ENCODE measurements at regions of chr6 and their contacts with region 1.

Region 1: GRCh38 chr6:149513915-149514314 is 29.1 kb upstream of the ZC3H12D start:
- DNase-seq: no peak
- ATAC-seq: peak in 2 of 8 donors; percentile 14 to 20
- H3K4me3 ChIP-seq: no peak overlapping the region
- H3K27ac ChIP-seq: no peak overlapping the region
- H3K4me1 ChIP-seq: peaks cover 0 to 8% (median 0%) of the 10 kb centered on the region in 9 donors
- H3K27me3 ChIP-seq: no peaks in the 10 kb centered on the region
- CTCF ChIP-seq: no peak

Region 2: GRCh38 chr6:149028767-149029405 is 485.0 kb before region 1 on chr6:
- intact Hi-C with region 1: loop called in 9 of 10 experiments (anchors 2 to 10 kb)
- DNase-seq: peak in 1 of 2 donors; percentile 84
- ATAC-seq: peak; percentile 57 to 80 (median 76)
- H3K4me3 ChIP-seq: no peak overlapping the region
- H3K27ac ChIP-seq: no peak overlapping the region
- H3K4me1 ChIP-seq: peaks cover 0 to 21% (median 0%) of the 10 kb centered on the region in 9 donors
- H3K27me3 ChIP-seq: no peaks in the 10 kb centered on the region
- CTCF ChIP-seq: peak; percentile 66 to 87 (median 80)

Region 3: DNA sequence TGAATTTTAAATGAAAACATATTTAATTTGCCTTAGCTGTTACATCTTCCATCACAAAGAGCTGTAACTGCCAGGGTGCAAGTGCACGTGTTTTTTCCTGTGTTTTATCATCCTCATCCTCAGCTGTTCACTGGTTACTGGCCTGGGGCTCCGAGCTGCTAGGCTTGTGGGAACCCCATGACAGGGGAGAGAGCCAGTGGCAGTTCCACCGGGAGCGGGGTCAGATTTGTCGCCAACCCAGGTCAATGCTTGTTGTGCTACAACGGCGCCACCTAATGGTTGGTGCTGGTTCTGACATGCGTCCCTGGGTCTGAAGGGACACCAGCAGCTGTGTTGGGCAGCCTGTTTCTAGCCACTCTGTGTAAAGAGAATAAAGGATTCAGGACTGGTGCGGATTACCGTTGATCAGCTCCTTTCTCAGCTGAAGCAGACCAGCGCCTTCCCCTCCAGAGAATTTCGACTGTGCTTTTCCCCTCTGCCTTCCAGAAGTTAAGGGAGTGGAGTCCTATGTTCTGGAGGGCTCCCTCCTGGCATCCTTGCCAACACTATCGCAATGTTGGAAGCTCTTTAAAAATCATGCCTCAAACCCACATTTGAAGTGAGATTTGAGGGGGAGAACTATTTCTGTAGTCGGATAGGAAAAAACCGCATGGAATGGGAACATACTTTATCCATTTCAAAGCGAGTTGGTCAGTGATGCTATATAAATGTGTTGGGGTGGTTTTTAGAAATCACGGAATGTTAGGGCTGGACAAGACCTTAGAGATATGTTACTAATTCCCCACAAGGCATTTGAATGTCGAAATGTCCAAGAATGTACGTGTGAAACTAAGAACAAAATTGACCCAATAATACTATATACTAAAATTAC is 81.8 kb before region 1 on chr6:
- intact Hi-C with region 1: loop called in 5 of 10 experiments (anchors 5 to 10 kb)
- DNase-seq: peak; percentile 87 to 89
- ATAC-seq: peak; percentile 89 to 97 (median 93)
- H3K4me3 ChIP-seq: no peak overlapping the region
- H3K27ac ChIP-seq: no peak overlapping the region
- H3K4me1 ChIP-seq: peaks cover 0 to 7% (median 0%) of the 10 kb centered on the region in 9 donors
- H3K27me3 ChIP-seq: peaks cover 0 to 22% (median 0%) of the 10 kb centered on the region in 7 donors
- CTCF ChIP-seq: peak; percentile 78 to 97 (median 95)

Region 4: DNA sequence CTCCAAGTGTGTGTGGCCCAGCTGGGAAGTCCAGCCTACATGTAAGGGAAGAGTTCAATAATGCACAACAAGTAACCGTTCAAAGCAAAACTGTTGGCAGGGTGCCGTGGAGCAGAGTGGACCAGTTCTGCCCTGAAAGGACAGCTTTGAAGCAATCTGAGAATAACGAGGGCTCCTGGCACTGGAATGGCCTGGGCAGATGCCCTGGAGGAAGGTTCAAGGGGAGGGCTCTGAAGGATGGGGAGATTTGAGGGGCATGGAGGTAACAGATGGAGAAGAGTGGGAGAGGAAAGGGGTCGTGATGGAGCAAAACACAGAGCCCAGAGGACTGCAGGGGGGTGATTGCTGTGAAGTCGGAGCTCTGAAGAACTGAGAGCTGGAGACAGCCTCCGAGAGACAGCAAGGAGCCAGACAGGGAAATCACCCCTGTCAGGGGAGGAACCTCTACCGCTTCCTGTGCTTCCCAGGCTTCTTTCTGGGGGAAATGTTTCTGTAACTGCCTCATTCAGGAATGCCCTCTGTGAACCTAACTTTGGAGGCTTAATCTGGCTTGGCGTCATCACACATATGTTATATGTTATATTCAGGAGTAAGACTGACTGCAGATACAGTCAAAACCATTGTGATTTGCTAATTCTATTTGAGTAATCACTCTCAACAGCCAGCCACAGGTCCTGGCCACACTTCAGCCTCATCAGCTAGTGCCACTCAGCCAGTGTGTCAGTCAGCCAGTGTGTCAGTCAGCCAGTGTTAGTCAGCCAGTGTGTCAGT is 70.3 kb before region 1 on chr6:
- intact Hi-C with region 1: loop called in 3 of 10 experiments (anchors 5 to 10 kb)
- DNase-seq: no peak
- ATAC-seq: peak in 4 of 8 donors; percentile 21 to 42 (median 31)
- H3K4me3 ChIP-seq: no peak overlapping the region
- H3K27ac ChIP-seq: no peak overlapping the region
- H3K4me1 ChIP-seq: peaks cover 0 to 4% (median 0%) of the 10 kb centered on the region in 9 donors
- H3K27me3 ChIP-seq: peaks cover 0 to 66% (median 39%) of the 10 kb centered on the region in 7 donors
- CTCF ChIP-seq: no peak

Region 5: GRCh38 chr6:149454386-149454848 is 59.5 kb before region 1 on chr6:
- intact Hi-C with region 1: loop called in 3 of 10 experiments (anchors 2 to 5 kb)
- DNase-seq: peak; percentile 96 to 99
- ATAC-seq: peak; percentile 90 to 96 (median 94)
- H3K4me3 ChIP-seq: peak overlapping the region in 3 of 10 donors; percentile 1 to 12 (median 2)
- H3K27ac ChIP-seq: peak overlapping the region; percentile 62 to 85 (median 78)
- H3K4me1 ChIP-seq: peaks cover 28 to 73% (median 60%) of the 10 kb centered on the region in 9 donors
- H3K27me3 ChIP-seq: peaks cover 0 to 33% (median 20%) of the 10 kb centered on the region in 7 donors
- CTCF ChIP-seq: no peak

Measured in heart right ventricle (tissue), 16 donors.